GM10248 (cell line): ENCODE measurements at regions of chr12 and their contacts with region 1.

Region 1: GRCh38 chr12:59149997-59150642 is 229.8 kb upstream of the LRIG3 start:
- DNase-seq: peak; percentile 31
- CTCF ChIP-seq: peak; percentile 98

Region 2: DNA sequence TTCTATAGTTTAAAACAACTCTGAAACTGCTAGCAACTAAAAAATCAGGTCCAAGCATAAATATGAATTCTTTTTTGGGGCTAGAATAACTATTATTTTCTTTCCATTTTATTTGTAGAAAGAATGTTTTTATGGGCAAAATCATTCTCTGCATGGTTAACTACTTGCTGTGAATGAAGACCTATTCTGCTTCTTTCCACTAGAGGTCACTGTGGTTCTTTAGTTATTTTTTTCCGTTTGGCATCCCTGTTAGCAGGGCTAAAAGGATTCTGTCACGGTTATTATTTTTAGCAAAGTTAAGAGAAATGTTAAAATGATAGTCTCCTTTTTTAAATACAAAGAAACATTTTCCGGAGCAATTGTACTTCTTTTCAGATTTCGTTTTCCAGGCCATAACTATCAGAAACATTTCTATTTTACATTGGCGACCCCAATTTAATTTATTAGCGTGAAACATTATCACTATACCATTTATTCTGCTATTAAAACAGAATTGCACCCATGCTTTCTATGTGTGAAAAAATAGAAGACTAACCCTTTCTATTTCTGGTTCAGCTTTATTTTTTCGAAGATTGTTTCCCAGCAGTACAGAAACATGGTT is 804.0 kb before region 1 on chr12:
- CTCF ChIA-PET with region 1: interaction called, 11 read pairs
- POLR2A ChIA-PET with region 1: no interaction called
- DNase-seq: peak; percentile 25
- CTCF ChIP-seq: peak; percentile 74

Region 3: GRCh38 chr12:58540480-58541299 is 609.4 kb before region 1 on chr12:
- CTCF ChIA-PET with region 1: interaction called, 18 read pairs
- POLR2A ChIA-PET with region 1: no interaction called
- DNase-seq: no peak
- CTCF ChIP-seq: peak; percentile 54

Region 4: DNA sequence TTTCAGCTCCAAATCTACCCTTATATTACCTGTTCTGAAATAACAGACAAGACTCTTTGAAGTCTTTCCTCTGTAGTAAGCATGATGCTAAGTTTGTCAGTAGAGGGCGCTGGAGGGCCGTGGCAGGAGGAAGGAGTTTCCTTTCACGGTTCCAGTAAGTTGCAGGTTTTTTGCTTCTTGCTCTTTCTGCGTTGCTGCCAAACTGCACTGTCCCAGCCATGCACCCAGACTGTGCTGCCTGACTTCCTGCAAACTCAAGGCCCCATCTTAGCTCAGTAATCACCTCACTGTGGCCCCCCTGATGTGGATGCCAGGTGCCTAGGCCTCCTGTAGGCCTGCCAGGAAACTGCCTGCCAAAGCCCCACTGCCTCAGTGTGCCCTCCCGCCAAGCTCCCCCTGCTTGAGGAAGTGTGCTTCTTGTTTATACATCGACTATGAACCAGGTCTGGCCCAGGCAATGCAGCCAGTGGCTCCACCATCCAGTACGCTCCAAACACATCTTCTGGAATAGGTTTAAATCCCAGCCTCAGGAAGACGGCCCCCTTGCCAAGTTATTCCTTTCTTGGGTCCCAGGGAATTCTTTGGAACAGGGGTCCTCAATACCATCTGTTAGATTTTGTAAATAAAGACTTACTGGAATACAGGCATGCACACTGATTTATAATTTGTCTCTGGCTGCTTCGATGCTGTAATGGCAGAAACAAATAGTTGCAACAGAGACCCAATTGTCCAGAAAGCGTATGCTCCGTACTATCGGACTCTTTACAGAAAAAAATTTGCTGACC is 36.1 kb before region 1 on chr12:
- CTCF ChIA-PET with region 1: interaction called, 54 read pairs
- POLR2A ChIA-PET with region 1: no interaction called
- DNase-seq: peak; percentile 61
- CTCF ChIP-seq: peak; percentile 82

Region 5: GRCh38 chr12:59194794-59195193 is 44.7 kb after region 1 on chr12:
- CTCF ChIA-PET with region 1: no interaction called
- POLR2A ChIA-PET with region 1: no interaction called
- DNase-seq: no peak
- CTCF ChIP-seq: no peak